AG04450 (cell line): ENCODE measurements at regions of chr1 and their contacts with region 1.

Region 1: DNA sequence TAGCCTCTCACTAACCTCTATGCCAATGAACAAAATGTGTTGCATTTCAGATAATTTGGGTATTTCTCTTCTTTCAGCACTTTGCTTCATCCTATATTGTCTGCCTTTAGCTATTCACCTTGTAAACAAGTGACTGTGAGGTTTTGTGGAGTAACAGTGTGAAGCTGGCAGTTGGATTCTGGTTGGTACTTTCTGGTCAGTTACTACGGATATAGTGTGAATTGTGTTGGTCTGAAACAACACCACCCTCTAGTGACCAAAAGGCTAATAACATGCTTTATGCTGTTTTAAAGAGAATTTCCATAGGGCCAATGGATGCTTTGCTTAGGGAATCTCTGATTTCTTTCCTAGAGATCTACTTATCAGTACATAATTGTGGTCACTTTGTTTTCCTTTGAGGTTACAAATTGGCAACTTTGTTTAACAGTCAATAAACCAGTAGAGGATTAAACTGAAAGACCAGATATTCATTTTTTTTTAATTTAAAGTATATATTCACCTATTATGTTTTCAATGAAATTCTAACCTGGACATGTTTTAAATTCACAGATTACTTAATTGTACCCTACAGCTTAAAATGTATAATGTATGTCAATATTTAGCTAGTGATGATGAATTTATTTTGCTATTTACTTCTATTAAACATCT is 2.5 kb upstream of the PTGER3 start:
- DNase-seq: peak; percentile 50
- H3K4me3 ChIP-seq: no peak overlapping the region
- H3K27ac ChIP-seq: no peak overlapping the region
- H3K27me3 ChIP-seq: peaks cover 35% of the 10 kb centered on the region
- CTCF ChIP-seq: peak; percentile 81

Region 2: GRCh38 chr1:70528590-70529333 is 521.3 kb before region 1 on chr1:
- CTCF ChIA-PET with region 1: interaction called, 30 read pairs
- POLR2A ChIA-PET with region 1: no interaction called
- DNase-seq: no peak
- H3K4me3 ChIP-seq: no peak overlapping the region
- H3K27ac ChIP-seq: no peak overlapping the region
- H3K27me3 ChIP-seq: no peaks in the 10 kb centered on the region
- CTCF ChIP-seq: peak; percentile 66

Region 3: GRCh38 chr1:70685300-70686241 is 364.5 kb before region 1 on chr1:
- CTCF ChIA-PET with region 1: interaction called, 33 read pairs
- POLR2A ChIA-PET with region 1: no interaction called
- DNase-seq: peak; percentile 4
- H3K4me3 ChIP-seq: no peak overlapping the region
- H3K27ac ChIP-seq: no peak overlapping the region
- H3K27me3 ChIP-seq: no peaks in the 10 kb centered on the region
- CTCF ChIP-seq: peak; percentile 83

Region 4: GRCh38 chr1:70745199-70745598 is 304.9 kb before region 1 on chr1:
- CTCF ChIA-PET with region 1: interaction called, 11 read pairs
- POLR2A ChIA-PET with region 1: no interaction called
- DNase-seq: no peak
- H3K4me3 ChIP-seq: no peak overlapping the region
- H3K27ac ChIP-seq: no peak overlapping the region
- H3K27me3 ChIP-seq: no peaks in the 10 kb centered on the region
- CTCF ChIP-seq: peak; percentile 45

Region 5: DNA sequence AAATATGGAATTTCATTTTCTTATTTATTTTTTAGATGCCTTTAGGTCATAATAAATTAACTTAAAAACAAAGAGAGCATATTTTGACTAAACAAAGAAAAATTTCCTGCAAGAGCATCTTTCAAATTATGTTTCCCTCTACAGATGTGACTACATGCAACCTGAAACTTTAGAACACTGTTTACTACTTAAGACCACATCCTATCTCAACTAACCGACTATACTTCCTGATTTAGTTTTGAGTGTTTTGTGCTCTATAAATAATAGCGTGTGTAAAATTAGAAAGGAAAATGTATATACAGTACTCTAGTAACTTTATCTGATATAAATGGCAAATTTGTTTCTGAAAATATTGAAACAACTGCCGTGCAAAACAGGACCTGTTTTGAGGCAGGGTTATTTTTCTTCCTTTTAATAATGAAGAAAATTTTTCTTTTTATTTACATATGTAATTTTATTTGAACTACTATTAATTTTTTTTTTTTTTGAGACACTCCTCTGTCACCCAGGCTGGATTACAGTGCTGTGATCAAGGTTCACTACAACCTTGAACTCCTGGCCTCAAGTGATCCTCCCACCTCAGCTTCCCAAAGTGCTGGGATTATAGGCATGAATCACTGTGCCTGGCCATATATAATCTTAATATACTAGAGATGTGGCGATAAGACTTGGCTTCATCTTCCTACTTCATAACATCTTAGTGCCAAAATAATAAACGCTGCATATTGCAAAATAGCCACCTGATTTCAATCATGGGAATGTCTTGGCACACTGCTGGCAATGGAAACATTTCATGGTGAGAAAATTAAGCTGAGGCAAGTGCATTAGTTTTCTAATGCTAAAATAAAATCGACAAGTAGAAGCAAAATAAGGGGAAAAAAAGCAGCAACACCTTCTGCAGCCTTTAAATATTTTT is 18.5 kb after region 1 on chr1:
- CTCF ChIA-PET with region 1: interaction called, 15 read pairs
- POLR2A ChIA-PET with region 1: no interaction called
- DNase-seq: no peak
- H3K4me3 ChIP-seq: no peak overlapping the region
- H3K27ac ChIP-seq: no peak overlapping the region
- H3K27me3 ChIP-seq: no peaks in the 10 kb centered on the region
- CTCF ChIP-seq: no peak